Common myeloid progenitor, CD34-positive (primary cell): ENCODE measurements at regions of chr2 and their contacts with region 1.

Region 1: DNA sequence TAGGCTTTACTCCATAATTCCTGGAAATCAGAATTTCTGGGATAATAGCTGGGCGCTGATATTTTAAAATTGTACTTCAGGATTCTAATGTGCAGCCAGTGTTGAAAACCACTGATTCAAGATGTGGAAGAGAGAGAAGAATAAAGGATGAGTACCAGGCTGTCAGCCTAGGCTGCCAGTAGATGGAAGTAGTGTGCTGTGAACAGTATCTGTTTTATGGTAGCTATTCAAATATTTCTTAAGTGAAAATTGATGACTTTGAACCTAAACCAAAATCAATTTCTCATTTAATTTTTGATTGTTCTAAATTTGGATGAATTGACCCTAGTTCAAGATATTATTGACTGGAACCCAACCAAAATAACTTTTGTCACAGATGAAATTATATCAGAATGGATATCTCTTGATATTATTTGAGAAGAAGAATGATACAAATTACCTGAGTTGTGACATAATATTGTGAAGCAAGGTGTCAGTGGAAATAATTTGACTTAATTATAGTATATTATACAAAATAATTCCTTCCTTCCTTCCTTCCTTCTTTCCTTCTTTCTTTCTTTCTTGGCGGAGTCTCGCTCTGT is 88.1 kb downstream of the COMMD1 start:
- DNase-seq: peak; percentile 70 to 85 (median 80)
- H3K4me3 ChIP-seq: no peak overlapping the region
- H3K27ac ChIP-seq: no peak overlapping the region
- H3K4me1 ChIP-seq: peaks cover 2 to 15% (median 6%) of the 10 kb centered on the region in 4 experiments
- H3K27me3 ChIP-seq: no peaks in the 10 kb centered on the region

Region 2: GRCh38 chr2:62071126-62071598 is 77.6 kb after region 1 on chr2:
- CTCF ChIA-PET with region 1: no interaction called
- POLR2A ChIA-PET with region 1: no interaction called
- DNase-seq: no peak
- H3K4me3 ChIP-seq: no peak overlapping the region
- H3K27ac ChIP-seq: no peak overlapping the region
- H3K4me1 ChIP-seq: no peaks in the 10 kb centered on the region
- H3K27me3 ChIP-seq: no peaks in the 10 kb centered on the region

Region 3: DNA sequence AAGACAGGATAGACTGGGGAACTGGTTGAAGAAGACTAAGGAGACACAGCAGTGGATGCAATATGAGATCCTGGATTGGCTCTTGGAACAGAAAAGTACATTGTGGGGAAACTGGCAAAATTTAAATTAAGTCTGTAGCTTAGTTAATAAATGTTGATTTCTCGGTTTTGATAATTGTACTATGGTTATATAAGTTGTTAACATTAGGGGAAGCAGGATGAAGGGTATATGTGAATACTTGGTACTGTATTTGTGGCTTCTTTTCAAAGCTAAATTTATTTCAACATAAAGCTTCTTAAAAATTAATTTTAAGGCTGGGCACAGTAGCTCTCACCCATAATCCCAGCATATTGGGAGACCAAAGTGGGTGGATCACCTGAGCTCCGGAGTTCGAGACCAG is 408.6 kb after region 1 on chr2:
- CTCF ChIA-PET with region 1: interaction called, 70 read pairs
- POLR2A ChIA-PET with region 1: no interaction called
- DNase-seq: no peak
- H3K4me3 ChIP-seq: no peak overlapping the region
- H3K27ac ChIP-seq: no peak overlapping the region
- H3K4me1 ChIP-seq: peaks cover 3 to 31% (median 15%) of the 10 kb centered on the region in 4 experiments
- H3K27me3 ChIP-seq: no peaks in the 10 kb centered on the region

Region 4: DNA sequence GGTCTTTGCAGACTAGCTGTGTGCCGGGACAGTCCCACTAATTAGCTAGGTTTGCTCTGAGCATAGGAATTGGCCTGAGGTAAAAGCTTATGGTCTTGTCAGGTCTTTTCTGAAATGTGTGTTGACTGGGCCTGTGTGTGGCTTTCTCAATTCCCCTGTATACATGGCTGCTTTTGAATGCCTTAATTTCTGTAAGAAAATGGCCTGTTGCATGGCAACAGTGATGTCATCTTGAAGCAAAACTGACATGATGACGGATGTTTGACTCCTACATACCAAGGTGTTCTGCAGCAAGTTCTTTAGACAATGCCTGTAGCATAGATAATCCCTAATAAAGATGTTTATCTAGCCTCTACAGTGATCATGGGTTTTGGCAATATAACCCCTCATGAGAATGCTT is 1255.6 kb after region 1 on chr2:
- CTCF ChIA-PET with region 1: no interaction called
- POLR2A ChIA-PET with region 1: no interaction called
- DNase-seq: no peak
- H3K4me3 ChIP-seq: no peak overlapping the region
- H3K27ac ChIP-seq: no peak overlapping the region
- H3K4me1 ChIP-seq: no peaks in the 10 kb centered on the region
- H3K27me3 ChIP-seq: no peaks in the 10 kb centered on the region